GM12878 (cell line): ENCODE measurements at regions of chr4 and their contacts with region 1.

Region 1: DNA sequence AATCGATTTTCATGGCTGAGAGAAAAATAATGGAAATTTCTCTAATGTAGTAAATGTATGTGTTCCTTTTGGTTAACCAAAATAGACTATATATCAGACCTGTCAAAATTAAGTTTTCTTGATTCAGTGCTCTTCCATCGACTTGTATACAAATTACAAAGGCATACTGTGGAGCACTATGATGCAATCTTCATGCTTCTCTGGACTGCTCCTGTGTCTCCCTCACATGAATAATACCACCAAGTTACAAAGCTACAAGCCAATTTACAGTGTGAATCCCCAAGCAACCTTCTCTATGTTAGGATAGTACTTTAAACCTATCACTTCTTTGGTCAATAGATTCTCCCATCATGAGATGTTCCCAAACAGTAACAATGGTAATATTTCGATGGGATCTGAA is 577.9 kb downstream of the PPARGC1A start:
- DNase-seq: no peak
- ATAC-seq: no peak
- H3K4me3 ChIP-seq: no peak overlapping the region
- H3K27ac ChIP-seq: no peak overlapping the region
- H3K4me1 ChIP-seq: no peaks in the 10 kb centered on the region
- H3K27me3 ChIP-seq: no peaks in the 10 kb centered on the region
- CTCF ChIP-seq: no peak
- EP300 ChIP-seq: no peak
- POLR2A ChIP-seq: no peak
- RAD21 ChIP-seq: no peak

Region 2: DNA sequence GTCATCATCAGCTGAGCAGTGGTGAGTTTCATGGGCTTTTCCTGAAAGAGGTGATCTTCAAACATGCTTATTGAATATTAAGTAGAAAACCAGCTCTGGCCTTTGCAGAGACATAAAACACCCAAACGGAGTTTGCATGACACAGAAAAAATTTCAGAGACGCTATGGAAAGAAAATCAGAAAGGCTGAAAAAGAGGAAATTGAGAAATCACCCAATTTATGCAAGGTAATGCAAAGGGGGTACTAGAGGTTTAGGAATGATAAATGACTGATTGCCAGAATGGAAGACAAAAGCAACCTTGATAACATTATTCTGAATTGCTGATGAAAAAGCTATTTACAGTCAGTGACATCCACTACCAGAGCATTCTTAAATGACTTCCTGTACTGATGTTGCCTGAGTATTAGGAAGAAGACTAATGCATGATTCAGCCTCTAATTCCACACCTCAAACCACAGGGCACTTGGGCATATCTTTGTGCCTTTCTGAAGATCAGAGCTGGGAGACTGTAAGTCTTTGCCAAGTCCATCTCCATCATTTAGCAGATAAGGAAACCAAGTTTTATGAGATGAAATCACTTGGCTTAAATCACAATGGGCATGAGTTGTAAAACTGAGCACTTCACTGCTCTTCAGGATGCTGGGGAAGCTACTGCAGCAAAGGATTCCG is 12.2 kb after region 1 on chr4:
- CTCF ChIA-PET with region 1: interaction called, 3 read pairs
- POLR2A ChIA-PET with region 1: interaction called, 10 read pairs
- RAD21 ChIA-PET with region 1: no interaction called
- SMC1A ChIA-PET with region 1: interaction called, 44 read pairs
- in situ Hi-C with region 1: no loop called
- intact Hi-C with region 1: no loop called
- DNase-seq: no peak
- ATAC-seq: peak; percentile 47
- H3K4me3 ChIP-seq: no peak overlapping the region
- H3K27ac ChIP-seq: no peak overlapping the region
- H3K4me1 ChIP-seq: no peaks in the 10 kb centered on the region
- H3K27me3 ChIP-seq: no peaks in the 10 kb centered on the region
- CTCF ChIP-seq: no peak
- EP300 ChIP-seq: no peak
- POLR2A ChIP-seq: no peak
- RAD21 ChIP-seq: no peak

Region 3: GRCh38 chr4:23368081-23368697 is 56.2 kb after region 1 on chr4:
- CTCF ChIA-PET with region 1: no interaction called
- POLR2A ChIA-PET with region 1: no interaction called
- RAD21 ChIA-PET with region 1: no interaction called
- SMC1A ChIA-PET with region 1: no interaction called
- in situ Hi-C with region 1: no loop called
- intact Hi-C with region 1: no loop called
- DNase-seq: no peak
- ATAC-seq: peak; percentile 74
- H3K4me3 ChIP-seq: no peak overlapping the region
- H3K27ac ChIP-seq: no peak overlapping the region
- H3K4me1 ChIP-seq: no peaks in the 10 kb centered on the region
- H3K27me3 ChIP-seq: no peaks in the 10 kb centered on the region
- CTCF ChIP-seq: peak in 1 of 3 experiments; percentile 6; a peak in 1 of 6 replicates
- EP300 ChIP-seq: no peak
- POLR2A ChIP-seq: no peak
- RAD21 ChIP-seq: peak; percentile 34; the same call in 1 of the 2 replicates